Thyroid gland (tissue), 4 donors: ENCODE measurements at regions of chr4 and their contacts with region 1.

Region 1: GRCh38 chr4:88378691-88379559 is at the start of gene HERC6:
- DNase-seq: peak; percentile 76 to 82
- H3K4me3 ChIP-seq: peak within 1 kb of the TSS; percentile 80 to 99 (median 98)
- H3K27ac ChIP-seq: peak within 1 kb of the TSS; percentile 88 to 98 (median 89)
- H3K4me1 ChIP-seq: no peaks in the 10 kb centered on the region
- H3K27me3 ChIP-seq: no peaks in the 10 kb centered on the region
- CTCF ChIP-seq: peak; percentile 62 to 85 (median 72)
- POLR2A ChIP-seq: peak in 1 of 2 donors; percentile 28
- total RNA-seq, gene HERC6: 6.7 to 14.0 (median 9.6) TPM

Region 2: GRCh38 chr4:88456757-88457306 is 77.9 kb after region 1 on chr4 and contains the start of gene HERC5:
- intact Hi-C with region 1: loop called (anchors 5 kb)
- DNase-seq: peak; percentile 91 to 95
- H3K4me3 ChIP-seq: peak within 1 kb of the TSS; percentile 48 to 77 (median 59)
- H3K27ac ChIP-seq: peak within 1 kb of the TSS; percentile 61 to 91 (median 88)
- H3K4me1 ChIP-seq: no peaks in the 10 kb centered on the region
- H3K27me3 ChIP-seq: no peaks in the 10 kb centered on the region
- CTCF ChIP-seq: peak in 4 of 6 experiments; percentile 66 to 86 (median 78)
- POLR2A ChIP-seq: peak in 1 of 2 donors; percentile 86
- total RNA-seq, gene HERC5: 8.1 to 9.7 (median 8.7) TPM